ENCODE measurements at regions of chr6 and their contacts with region 1.

Region 1: DNA sequence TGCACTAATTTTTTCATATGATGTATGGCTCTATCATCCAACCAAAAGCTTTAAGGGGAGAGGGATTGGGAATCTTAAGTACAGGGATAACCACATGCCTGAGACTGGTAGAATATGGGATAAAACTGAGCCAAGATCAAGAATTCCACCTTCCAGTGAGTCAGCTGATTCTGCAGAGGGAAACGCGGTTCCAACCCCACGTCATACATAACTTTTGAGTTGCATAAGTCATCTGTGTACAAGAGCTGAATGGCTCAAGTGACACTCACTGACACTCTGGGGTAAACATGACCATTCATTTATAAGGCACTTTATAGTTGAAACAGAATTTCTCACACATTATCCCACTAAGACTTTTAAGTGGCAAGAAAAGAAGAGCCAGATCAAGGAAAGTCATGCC is 16.4 kb downstream of the TRIM27 start:
- DNase-seq: peak; percentile 42
- H3K4me3 Mint-ChIP-seq: no peak overlapping the region
- H3K27ac Mint-ChIP-seq: peak overlapping the region; percentile 68
- H3K4me1 Mint-ChIP-seq: no peaks in the 10 kb centered on the region
- H3K27me3 Mint-ChIP-seq: no peaks in the 10 kb centered on the region
- CTCF ChIP-seq: no peak

Region 2: GRCh38 chr6:28923318-28924102 is 16.1 kb after region 1 on chr6 and contains the start of gene TRIM27:
- CTCF ChIA-PET with region 1: interaction called, 3 read pairs
- POLR2A ChIA-PET with region 1: interaction called, 15 read pairs
- intact Hi-C with region 1: no loop called
- DNase-seq: peak; percentile 92
- H3K4me3 Mint-ChIP-seq: peak within 1 kb of the TSS; percentile 93
- H3K27ac Mint-ChIP-seq: peak within 1 kb of the TSS; percentile 88
- H3K4me1 Mint-ChIP-seq: peaks cover 19% of the 10 kb centered on the region
- H3K27me3 Mint-ChIP-seq: no peaks in the 10 kb centered on the region
- CTCF ChIP-seq: no peak
- total RNA-seq, gene TRIM27: 68.8 and 68.9 TPM in 2 replicates

Region 3: GRCh38 chr6:29251741-29252140 is 344.3 kb after region 1 on chr6:
- CTCF ChIA-PET with region 1: no interaction called
- POLR2A ChIA-PET with region 1: no interaction called
- intact Hi-C with region 1: no loop called
- DNase-seq: no peak
- H3K4me3 Mint-ChIP-seq: no peak overlapping the region
- H3K27ac Mint-ChIP-seq: no peak overlapping the region
- H3K4me1 Mint-ChIP-seq: no peaks in the 10 kb centered on the region
- H3K27me3 Mint-ChIP-seq: peaks cover 53% of the 10 kb centered on the region
- CTCF ChIP-seq: no peak

Measured in MCF 10A (cell line).